Endothelial cell of umbilical vein (primary cell): ENCODE measurements at regions of chr1 and their contacts with region 1.

Region 1: GRCh38 chr1:150010393-150011115 is at the start of gene OTUD7B:
- DNase-seq: peak; percentile 82
- H3K4me3 ChIP-seq: peak within 1 kb of the TSS; percentile 59 to 81 (median 74)
- H3K27ac ChIP-seq: peak within 1 kb of the TSS; percentile 74
- H3K4me1 ChIP-seq: peaks cover 9% of the 10 kb centered on the region
- H3K27me3 ChIP-seq: no peaks in the 10 kb centered on the region
- CTCF ChIP-seq: no peak
- POLR2A ChIP-seq: peak; percentile 93
- total RNA-seq, gene OTUD7B: 21.1 and 22.8 TPM in 2 replicates

Region 2: GRCh38 chr1:149879556-149879955 is 131.0 kb before region 1 on chr1:
- CTCF ChIA-PET with region 1: no interaction called
- POLR2A ChIA-PET with region 1: no interaction called
- dilution Hi-C with region 1: no loop called
- intact Hi-C with region 1: no loop called
- DNase-seq: no peak
- H3K4me3 ChIP-seq: no peak overlapping the region
- H3K27ac ChIP-seq: no peak overlapping the region
- H3K4me1 ChIP-seq: peaks cover 2% of the 10 kb centered on the region
- H3K27me3 ChIP-seq: peaks cover 0 to 4% of the 10 kb centered on the region in 2 experiments
- CTCF ChIP-seq: no peak
- POLR2A ChIP-seq: no peak

Region 3: GRCh38 chr1:149962123-149962548 is 48.4 kb before region 1 on chr1:
- CTCF ChIA-PET with region 1: interaction called, 19 read pairs
- POLR2A ChIA-PET with region 1: no interaction called
- dilution Hi-C with region 1: no loop called
- intact Hi-C with region 1: loop called (anchors 5 kb)
- DNase-seq: peak; percentile 81
- H3K4me3 ChIP-seq: no peak overlapping the region
- H3K27ac ChIP-seq: no peak overlapping the region
- H3K4me1 ChIP-seq: no peaks in the 10 kb centered on the region
- H3K27me3 ChIP-seq: no peaks in the 10 kb centered on the region
- CTCF ChIP-seq: peak; percentile 48 to 53
- POLR2A ChIP-seq: no peak

Region 4: DNA sequence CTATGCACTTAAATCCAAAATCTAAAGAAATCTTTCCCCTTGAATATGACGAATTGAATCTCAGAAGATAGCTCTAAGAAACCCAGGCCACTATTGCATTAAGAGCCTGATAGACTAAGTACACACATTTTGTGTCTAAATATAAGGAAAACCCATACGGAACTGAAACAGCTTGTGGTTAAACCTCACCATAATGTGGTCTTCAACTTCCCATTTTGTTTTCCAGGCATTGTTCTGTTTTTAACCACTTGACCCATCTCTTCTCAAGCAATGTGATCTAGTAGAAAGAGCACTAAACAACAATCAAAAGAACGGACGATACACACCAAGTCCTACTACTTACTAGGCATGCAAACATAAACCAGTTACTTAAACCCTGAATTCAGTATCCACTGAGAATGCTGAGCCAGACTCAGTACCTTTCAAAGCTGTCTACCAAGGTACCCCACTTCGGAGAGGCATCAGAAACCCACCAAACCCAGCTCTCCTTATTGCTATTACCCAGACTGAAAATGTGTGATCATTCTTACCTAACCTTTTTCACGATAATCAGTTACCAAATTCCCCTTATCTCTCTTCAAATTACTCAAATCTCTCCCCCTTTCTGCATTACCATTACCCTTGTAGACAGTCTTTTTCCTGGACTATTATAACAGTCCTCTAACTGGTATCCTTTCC is 12.8 kb before region 1 on chr1:
- CTCF ChIA-PET with region 1: interaction called, 13 read pairs
- POLR2A ChIA-PET with region 1: interaction called, 4 read pairs
- dilution Hi-C with region 1: no loop called
- intact Hi-C with region 1: loop called (anchors 1 kb)
- DNase-seq: no peak
- H3K4me3 ChIP-seq: no peak overlapping the region
- H3K27ac ChIP-seq: no peak overlapping the region
- H3K4me1 ChIP-seq: peaks cover 8% of the 10 kb centered on the region
- H3K27me3 ChIP-seq: no peaks in the 10 kb centered on the region
- CTCF ChIP-seq: no peak
- POLR2A ChIP-seq: no peak

Region 5: DNA sequence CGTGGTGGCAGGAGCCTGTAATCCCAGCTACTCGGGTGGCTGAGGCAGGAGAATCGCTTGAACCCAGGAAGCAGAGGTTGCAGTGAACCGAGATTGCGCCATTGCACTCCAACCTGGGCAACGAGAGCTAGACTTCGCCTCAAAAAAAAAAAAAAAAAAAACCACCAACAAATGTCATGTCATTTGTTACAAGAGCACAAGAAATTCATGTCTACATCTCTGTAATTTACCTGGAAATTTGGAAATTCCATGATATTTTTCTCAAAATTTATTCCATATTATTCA is 40.5 kb after region 1 on chr1:
- CTCF ChIA-PET with region 1: interaction called, 12 read pairs
- POLR2A ChIA-PET with region 1: no interaction called
- dilution Hi-C with region 1: no loop called
- intact Hi-C with region 1: no loop called
- DNase-seq: no peak
- H3K4me3 ChIP-seq: no peak overlapping the region
- H3K27ac ChIP-seq: no peak overlapping the region
- H3K4me1 ChIP-seq: no peaks in the 10 kb centered on the region
- H3K27me3 ChIP-seq: no peaks in the 10 kb centered on the region
- CTCF ChIP-seq: no peak
- POLR2A ChIP-seq: no peak

Region 6: DNA sequence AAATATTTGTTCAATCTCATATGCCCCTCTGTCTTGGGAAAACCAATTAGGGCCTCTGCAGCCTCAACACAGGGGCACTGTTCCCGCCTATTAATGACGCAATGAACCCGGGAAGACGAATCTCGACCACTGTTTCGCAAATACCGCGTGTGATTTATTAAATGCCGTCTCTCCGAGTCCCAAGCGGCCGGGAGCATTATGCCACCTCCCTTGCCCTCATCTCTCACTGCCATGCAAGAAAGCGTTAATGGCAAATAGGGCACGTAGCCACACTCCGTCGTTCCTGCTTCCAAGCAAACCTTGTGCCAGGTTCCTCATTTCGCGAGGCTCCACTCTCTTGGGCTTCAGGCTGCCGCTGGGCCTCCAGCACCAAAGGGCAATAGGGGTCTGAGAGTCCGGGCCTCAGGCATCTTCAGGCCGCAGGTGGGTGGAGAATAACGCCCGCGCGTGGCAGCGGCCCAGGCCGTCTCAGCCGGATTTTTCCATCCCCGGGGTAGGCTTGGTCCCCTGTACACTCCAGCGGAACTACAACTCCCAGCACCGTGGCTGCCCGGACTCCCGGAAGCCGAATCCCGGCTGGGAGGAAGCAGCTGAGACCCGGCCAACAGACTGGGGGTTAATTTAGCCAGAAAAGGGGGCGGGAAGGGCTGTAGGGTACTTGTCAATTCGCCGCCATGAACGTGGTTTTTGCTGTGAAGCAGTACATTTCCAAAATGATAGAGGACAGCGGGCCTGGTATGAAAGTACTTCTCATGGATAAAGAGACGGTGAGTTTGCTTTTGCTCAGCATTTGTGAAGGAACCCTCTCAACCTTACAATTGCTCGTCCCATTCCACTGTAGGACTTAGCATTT is 56.9 kb after region 1 on chr1 and contains the start of gene VPS45:
- CTCF ChIA-PET with region 1: no interaction called
- POLR2A ChIA-PET with region 1: interaction called, 3 read pairs
- dilution Hi-C with region 1: no loop called
- intact Hi-C with region 1: loop called (anchors 1 kb)
- DNase-seq: peak; percentile 93
- H3K4me3 ChIP-seq: peak within 1 kb of the TSS; percentile 45 to 85 (median 72)
- H3K27ac ChIP-seq: peak within 1 kb of the TSS; percentile 53
- H3K4me1 ChIP-seq: peaks cover 24% of the 10 kb centered on the region
- H3K27me3 ChIP-seq: no peaks in the 10 kb centered on the region
- CTCF ChIP-seq: peak; percentile 18 to 36
- POLR2A ChIP-seq: no peak
- total RNA-seq, gene VPS45: 40.4 and 43.7 TPM in 2 replicates

Region 7: GRCh38 chr1:150142083-150142482 is 131.5 kb after region 1 on chr1:
- CTCF ChIA-PET with region 1: no interaction called
- POLR2A ChIA-PET with region 1: no interaction called
- dilution Hi-C with region 1: no loop called
- intact Hi-C with region 1: loop called (anchors 1 kb)
- DNase-seq: peak; percentile 90
- H3K4me3 ChIP-seq: peak overlapping the region in 1 of 3 experiments; percentile 22
- H3K27ac ChIP-seq: peak overlapping the region; percentile 91
- H3K4me1 ChIP-seq: peaks cover 37% of the 10 kb centered on the region
- H3K27me3 ChIP-seq: no peaks in the 10 kb centered on the region
- CTCF ChIP-seq: no peak
- POLR2A ChIP-seq: no peak

Region 8: DNA sequence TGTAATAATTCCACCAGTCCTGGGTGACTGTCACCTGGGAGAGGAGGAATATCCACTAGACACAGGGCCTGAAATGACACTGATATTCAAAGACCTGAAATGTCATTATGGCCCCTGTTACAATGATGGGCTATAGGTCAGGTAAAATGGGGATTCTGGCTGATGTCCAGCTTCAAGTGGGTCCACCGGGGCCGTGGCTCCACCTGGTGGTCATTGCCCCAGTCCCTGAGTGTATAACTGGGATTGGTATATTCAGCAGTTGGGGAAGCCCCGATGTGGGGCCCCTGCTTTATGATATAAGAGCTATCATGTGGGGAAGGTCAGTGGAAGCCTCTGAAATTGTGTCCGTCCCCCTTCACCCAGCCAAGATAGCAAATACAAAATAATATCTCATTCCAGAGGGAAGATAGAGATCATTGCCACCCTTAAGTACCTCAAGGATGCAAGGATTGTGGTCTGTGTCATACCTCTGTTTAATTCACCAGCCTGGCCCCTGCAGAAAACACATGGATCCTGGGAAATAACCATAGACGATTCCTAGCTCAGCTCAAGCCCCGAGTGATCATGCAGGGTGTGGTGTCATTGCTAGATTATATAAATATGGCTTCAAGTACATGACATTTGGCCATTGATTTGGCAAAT is 158.5 kb after region 1 on chr1:
- CTCF ChIA-PET with region 1: interaction called, 6 read pairs
- POLR2A ChIA-PET with region 1: no interaction called
- dilution Hi-C with region 1: no loop called
- intact Hi-C with region 1: loop called (anchors 5 kb)
- DNase-seq: peak; percentile 64
- H3K4me3 ChIP-seq: no peak overlapping the region
- H3K27ac ChIP-seq: no peak overlapping the region
- H3K4me1 ChIP-seq: no peaks in the 10 kb centered on the region
- H3K27me3 ChIP-seq: no peaks in the 10 kb centered on the region
- CTCF ChIP-seq: peak; percentile 83 to 85
- POLR2A ChIP-seq: no peak